ENCODE measurements at regions of chrX and their contacts with region 1.

Region 1: GRCh38 chrX:130079824-130080406 is 30.4 kb downstream of the ELF4 start:
- DNase-seq: peak; percentile 36
- H3K4me3 Mint-ChIP-seq: no peak overlapping the region
- H3K27ac Mint-ChIP-seq: no peak overlapping the region
- H3K4me1 Mint-ChIP-seq: peaks cover 34% of the 10 kb centered on the region
- H3K27me3 Mint-ChIP-seq: no peaks in the 10 kb centered on the region

Region 2: DNA sequence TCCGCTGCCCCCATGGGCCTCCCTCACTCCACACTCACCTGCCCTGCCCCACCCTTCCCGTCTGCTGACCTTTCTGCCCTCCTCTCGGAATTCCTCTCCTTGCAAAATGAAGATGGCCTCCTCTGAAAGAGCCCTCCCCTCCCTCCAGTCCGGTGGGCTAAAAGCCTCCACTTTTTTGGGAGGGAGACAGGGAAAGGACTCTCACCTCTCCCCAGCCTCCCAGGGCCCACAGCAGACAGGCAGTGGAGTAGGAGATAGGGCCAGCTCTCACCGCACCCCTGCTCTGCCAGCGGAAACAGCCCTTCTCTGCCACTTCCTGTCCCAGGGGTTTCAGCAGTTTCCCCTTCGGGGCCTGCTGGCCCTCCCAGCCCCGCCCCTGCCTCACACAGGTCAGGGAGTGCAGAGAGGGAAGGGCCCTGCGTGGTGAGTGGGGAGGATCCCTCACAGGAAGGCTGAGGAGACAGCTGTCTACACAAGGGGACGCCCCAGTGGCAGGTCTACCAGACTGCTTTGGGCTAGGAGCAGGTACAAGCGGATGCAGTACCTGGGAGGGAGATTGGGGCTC is 12.1 kb after region 1 on chrX:
- intact Hi-C with region 1: loop called (anchors 1 kb)
- DNase-seq: peak; percentile 84
- H3K4me3 Mint-ChIP-seq: peak overlapping the region; percentile 90
- H3K27ac Mint-ChIP-seq: peak overlapping the region; percentile 95
- H3K4me1 Mint-ChIP-seq: peaks cover 34% of the 10 kb centered on the region
- H3K27me3 Mint-ChIP-seq: no peaks in the 10 kb centered on the region

Region 3: GRCh38 chrX:130120746-130121504 is 41.0 kb after region 1 on chrX:
- intact Hi-C with region 1: loop called (anchors 1 kb)
- DNase-seq: peak; percentile 54
- H3K4me3 Mint-ChIP-seq: peak overlapping the region; percentile 62
- H3K27ac Mint-ChIP-seq: peak overlapping the region; percentile 67
- H3K4me1 Mint-ChIP-seq: peaks cover 20% of the 10 kb centered on the region
- H3K27me3 Mint-ChIP-seq: no peaks in the 10 kb centered on the region

Region 4: DNA sequence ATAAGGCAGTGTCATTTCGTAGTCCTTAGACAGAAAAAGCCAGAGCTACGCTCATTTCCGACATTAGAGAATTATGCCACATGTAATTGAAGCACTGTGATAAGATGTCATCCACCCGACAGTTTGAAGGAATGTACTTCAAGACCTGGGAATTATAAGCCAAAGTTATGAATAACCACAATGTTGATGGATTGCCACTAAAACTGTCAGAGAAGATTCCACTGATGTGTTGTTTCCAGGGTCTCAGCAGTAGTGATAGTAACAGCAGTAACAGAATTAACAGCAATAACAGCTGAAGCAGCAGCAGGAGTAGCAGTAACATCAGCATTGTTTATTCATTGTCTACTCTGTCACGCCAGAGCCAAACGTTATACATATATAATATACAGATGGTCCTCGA is 116.6 kb after region 1 on chrX:
- intact Hi-C with region 1: loop called (anchors 1 kb)
- DNase-seq: no peak
- H3K4me3 Mint-ChIP-seq: no peak overlapping the region
- H3K27ac Mint-ChIP-seq: no peak overlapping the region
- H3K4me1 Mint-ChIP-seq: peaks cover 3% of the 10 kb centered on the region
- H3K27me3 Mint-ChIP-seq: no peaks in the 10 kb centered on the region

Measured in activated T-helper 2 cell treated with anti-CD3 and anti-CD28 coated beads, Interferon-gamma antibody, Interleukin-2, Interleukin-4, amounts not matched to agents 10 μg/mL and 5 μg/mL and 100 μg/mL, durations not matched to agents 14 hours and 24 hours and 36 hours (primary cell).